Endothelial cell of umbilical vein (primary cell): ENCODE measurements at regions of chr15 and their contacts with region 1.

Region 1: GRCh38 chr15:98292442-98293240 is 332.1 kb downstream of the ARRDC4 start:
- DNase-seq: peak; percentile 6
- H3K4me3 ChIP-seq: no peak overlapping the region
- H3K27ac ChIP-seq: no peak overlapping the region
- H3K4me1 ChIP-seq: no peaks in the 10 kb centered on the region
- H3K27me3 ChIP-seq: no peaks in the 10 kb centered on the region
- CTCF ChIP-seq: peak; percentile 62 to 77
- POLR2A ChIP-seq: no peak

Region 2: DNA sequence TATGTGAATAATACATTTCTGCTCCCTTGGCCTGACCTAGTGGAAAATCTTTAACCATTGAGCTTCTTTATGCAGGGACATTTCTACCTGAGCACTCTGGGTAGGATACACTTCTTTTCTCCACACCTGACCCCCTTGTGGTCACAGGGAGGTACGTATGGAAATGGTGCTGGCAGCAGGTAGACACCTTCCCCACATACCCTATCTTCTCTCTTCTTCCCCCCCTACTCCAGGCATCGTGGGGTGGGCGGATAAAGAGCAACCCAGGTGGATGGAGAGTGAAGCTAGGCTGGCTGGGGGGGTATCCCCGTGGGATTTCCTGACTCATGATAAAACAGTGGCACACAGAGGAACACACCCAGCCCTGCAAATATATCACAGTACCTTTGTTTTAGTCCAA is 20.0 kb before region 1 on chr15:
- CTCF ChIA-PET with region 1: no interaction called
- POLR2A ChIA-PET with region 1: no interaction called
- dilution Hi-C with region 1: no loop called
- intact Hi-C with region 1: no loop called
- DNase-seq: no peak
- H3K4me3 ChIP-seq: no peak overlapping the region
- H3K27ac ChIP-seq: no peak overlapping the region
- H3K4me1 ChIP-seq: no peaks in the 10 kb centered on the region
- H3K27me3 ChIP-seq: no peaks in the 10 kb centered on the region
- CTCF ChIP-seq: no peak
- POLR2A ChIP-seq: no peak

Region 3: DNA sequence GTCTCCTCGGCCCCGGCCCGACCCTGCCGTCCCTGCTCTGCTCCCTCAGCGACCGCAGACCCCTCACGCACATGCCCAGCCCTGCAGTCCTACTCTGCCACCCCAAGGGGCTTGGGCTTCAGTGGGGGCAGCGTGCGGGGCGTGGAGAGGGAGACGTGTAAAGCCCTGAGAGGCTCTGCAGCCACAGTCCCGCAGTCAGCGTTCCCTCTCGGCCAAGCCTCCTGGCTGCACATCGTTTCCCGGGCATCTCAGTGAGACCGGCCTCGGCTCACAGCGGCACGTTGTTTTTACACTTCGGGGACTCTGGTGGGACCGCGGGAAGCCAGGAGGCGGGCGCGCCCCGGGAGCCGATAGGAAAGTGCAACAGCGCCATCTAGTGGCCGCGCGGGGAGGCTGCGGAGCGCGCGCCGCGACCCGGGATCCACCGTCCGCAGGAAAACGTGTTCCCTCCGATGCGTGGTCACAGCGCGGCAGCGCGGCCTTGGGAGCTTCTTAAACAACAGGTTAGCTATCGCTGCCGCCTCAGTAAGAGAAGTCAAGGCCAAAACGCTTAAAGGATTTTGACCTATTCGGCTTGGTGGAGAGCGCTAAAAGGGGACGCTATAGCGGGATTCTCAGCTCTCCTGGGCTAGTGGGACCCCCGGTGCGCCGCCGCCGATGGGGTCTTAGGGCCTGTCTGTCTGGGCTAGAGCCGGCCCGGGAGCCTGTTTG is 128.9 kb after region 1 on chr15:
- CTCF ChIA-PET with region 1: interaction called, 3 read pairs
- POLR2A ChIA-PET with region 1: no interaction called
- dilution Hi-C with region 1: no loop called
- intact Hi-C with region 1: loop called (anchors 1 kb)
- DNase-seq: peak; percentile 36
- H3K4me3 ChIP-seq: no peak overlapping the region
- H3K27ac ChIP-seq: no peak overlapping the region
- H3K4me1 ChIP-seq: no peaks in the 10 kb centered on the region
- H3K27me3 ChIP-seq: peaks cover 6 to 18% of the 10 kb centered on the region in 2 experiments
- CTCF ChIP-seq: peak; percentile 97 to 99
- POLR2A ChIP-seq: no peak